MCF 10A (cell line): ENCODE measurements at regions of chr1 and their contacts with region 1.

Region 1: DNA sequence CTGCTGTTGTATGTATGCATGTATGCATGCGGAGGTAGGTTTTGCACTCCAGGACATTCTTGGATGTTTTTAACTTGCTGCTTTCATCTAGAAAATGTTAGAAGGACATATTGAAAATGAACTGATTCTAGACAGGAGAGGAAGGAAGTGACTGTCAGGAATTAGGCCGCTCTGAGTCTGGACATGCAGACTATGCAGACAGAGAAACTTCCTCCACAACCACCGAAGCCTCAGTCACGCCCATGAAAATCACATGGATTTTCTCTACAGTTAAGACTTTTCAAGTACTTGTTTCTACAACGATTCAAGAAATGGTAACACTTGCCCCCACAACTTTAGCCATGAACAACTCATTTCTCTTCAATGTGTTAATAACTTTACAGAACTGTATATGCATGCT is 211.1 kb downstream of the SMYD3 start:
- DNase-seq: no peak
- H3K4me3 Mint-ChIP-seq: no peak overlapping the region
- H3K27ac Mint-ChIP-seq: no peak overlapping the region
- H3K4me1 Mint-ChIP-seq: peaks cover 16% of the 10 kb centered on the region
- H3K27me3 Mint-ChIP-seq: no peaks in the 10 kb centered on the region
- CTCF ChIP-seq: no peak

Region 2: DNA sequence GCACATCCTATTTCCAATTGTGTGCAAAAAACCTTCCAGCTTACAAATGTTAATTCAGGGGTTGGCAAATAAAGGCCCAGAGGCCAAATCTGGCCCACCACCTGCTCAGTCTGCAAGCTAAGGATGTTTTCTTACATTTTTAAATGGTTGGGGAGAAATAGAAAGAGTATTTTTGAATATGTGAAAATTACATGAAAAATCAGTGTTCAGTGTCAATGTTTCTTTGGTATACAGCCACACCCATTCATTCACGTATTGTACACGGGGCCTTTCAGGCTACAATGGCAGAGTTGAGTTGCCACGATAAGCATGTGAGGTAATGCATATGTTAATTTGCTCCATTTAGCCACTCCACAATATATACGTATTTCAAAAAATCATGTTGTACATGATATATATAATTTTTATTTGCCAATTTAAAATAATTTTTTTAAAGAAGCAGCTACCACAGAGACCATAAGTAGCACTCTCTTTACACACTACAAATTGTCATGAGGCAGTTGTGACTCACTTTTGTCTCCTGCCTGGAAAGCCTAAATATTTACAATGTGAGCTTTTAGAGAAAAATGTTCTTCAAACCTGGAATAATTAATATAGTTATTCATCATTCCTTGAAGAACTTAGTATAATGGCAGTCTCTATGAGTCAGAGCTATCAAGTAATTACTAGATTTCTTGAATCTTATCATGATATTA is 21.5 kb after region 1 on chr1:
- CTCF ChIA-PET with region 1: no interaction called
- POLR2A ChIA-PET with region 1: interaction called, 10 read pairs
- intact Hi-C with region 1: no loop called
- DNase-seq: no peak
- H3K4me3 Mint-ChIP-seq: no peak overlapping the region
- H3K27ac Mint-ChIP-seq: no peak overlapping the region
- H3K4me1 Mint-ChIP-seq: no peaks in the 10 kb centered on the region
- H3K27me3 Mint-ChIP-seq: no peaks in the 10 kb centered on the region
- CTCF ChIP-seq: no peak